Ovary (tissue), 10 donors: ENCODE measurements at regions of chr7 and their contacts with region 1.

Region 1: GRCh38 chr7:140924019-140924820 is 509 bp downstream of the BRAF start:
- DNase-seq: peak; percentile 74 to 78 (median 76)
- H3K4me3 ChIP-seq: peak overlapping the region; percentile 98
- H3K27ac ChIP-seq: peak overlapping the region; percentile 92 to 93
- H3K4me1 ChIP-seq: no peaks in the 10 kb centered on the region
- H3K27me3 ChIP-seq: no peaks in the 10 kb centered on the region
- CTCF ChIP-seq: peak in 2 of 3 donors; percentile 23 to 33
- EP300 ChIP-seq: no peak
- POLR2A ChIP-seq: no peak

Region 2: GRCh38 chr7:140551355-140552239 is 372.6 kb before region 1 on chr7:
- intact Hi-C with region 1: no loop called
- DNase-seq: peak in 3 of 5 donors; percentile 39 to 59 (median 42)
- H3K4me3 ChIP-seq: no peak overlapping the region
- H3K27ac ChIP-seq: no peak overlapping the region
- H3K4me1 ChIP-seq: peaks cover 3% of the 10 kb centered on the region
- H3K27me3 ChIP-seq: no peaks in the 10 kb centered on the region
- CTCF ChIP-seq: no peak
- EP300 ChIP-seq: no peak
- POLR2A ChIP-seq: no peak

Region 3: DNA sequence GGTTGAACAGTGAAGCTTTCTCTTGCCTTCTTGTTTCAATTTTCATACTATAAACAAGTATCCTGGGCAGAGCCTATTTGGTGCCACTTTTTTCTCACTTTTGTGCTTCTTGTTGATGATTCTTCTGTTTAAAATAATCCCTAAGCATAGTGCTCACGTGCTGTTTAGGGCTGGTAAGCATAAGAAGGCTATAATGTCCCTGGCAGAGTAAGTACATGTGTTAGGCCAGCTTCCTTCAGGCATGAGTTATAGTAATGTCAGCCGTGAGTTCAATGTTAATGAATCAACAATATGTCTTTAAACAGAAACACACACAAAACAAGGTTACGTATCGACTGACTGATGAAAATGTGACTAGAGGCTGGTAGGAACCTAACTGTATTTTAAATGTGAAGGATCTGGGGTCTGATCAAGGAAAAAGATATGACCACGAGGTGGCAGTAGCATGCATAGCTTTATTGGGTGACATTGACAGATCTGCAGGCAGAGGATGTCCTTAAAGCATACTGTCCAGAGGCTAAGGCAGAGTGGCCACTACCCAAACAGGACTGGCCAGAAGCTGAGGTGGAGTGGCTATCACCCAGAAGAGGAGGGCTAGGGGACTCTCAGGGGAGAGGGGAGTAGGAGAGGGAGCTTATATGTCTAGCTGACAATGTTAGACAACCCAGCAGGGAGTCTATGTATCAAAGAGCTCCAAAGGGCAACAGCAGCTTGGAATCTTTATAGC is 113.2 kb before region 1 on chr7:
- intact Hi-C with region 1: loop called in 1 of 4 experiments (anchors 10 kb)
- DNase-seq: peak in 4 of 5 donors; percentile 21 to 50 (median 36)
- H3K4me3 ChIP-seq: no peak overlapping the region
- H3K27ac ChIP-seq: no peak overlapping the region
- H3K4me1 ChIP-seq: no peaks in the 10 kb centered on the region
- H3K27me3 ChIP-seq: no peaks in the 10 kb centered on the region
- CTCF ChIP-seq: peak; percentile 24 to 57 (median 45)
- EP300 ChIP-seq: no peak
- POLR2A ChIP-seq: no peak

Region 4: DNA sequence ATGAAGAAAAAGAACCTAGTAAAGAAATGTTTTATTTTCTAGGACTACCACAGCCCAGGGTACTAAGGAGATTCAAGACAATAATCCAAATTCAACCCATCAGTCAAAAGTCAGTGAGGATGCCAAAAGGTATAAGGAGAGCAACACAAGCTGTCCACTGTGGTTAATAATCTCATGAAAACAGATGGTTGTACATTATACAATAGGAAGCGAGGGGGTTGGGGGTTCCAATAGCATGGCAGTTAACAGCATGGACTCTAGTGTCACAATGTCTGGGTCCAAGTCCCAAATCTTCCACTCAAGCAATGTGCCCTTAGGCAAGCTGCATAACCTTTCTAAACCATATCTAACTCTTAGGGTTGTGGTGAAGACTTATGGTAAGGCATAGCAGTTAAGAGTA is 34.6 kb before region 1 on chr7:
- intact Hi-C with region 1: no loop called
- DNase-seq: no peak
- H3K4me3 ChIP-seq: no peak overlapping the region
- H3K27ac ChIP-seq: no peak overlapping the region
- H3K4me1 ChIP-seq: peaks cover 5% of the 10 kb centered on the region
- H3K27me3 ChIP-seq: no peaks in the 10 kb centered on the region
- CTCF ChIP-seq: no peak
- EP300 ChIP-seq: no peak
- POLR2A ChIP-seq: no peak

Region 5: DNA sequence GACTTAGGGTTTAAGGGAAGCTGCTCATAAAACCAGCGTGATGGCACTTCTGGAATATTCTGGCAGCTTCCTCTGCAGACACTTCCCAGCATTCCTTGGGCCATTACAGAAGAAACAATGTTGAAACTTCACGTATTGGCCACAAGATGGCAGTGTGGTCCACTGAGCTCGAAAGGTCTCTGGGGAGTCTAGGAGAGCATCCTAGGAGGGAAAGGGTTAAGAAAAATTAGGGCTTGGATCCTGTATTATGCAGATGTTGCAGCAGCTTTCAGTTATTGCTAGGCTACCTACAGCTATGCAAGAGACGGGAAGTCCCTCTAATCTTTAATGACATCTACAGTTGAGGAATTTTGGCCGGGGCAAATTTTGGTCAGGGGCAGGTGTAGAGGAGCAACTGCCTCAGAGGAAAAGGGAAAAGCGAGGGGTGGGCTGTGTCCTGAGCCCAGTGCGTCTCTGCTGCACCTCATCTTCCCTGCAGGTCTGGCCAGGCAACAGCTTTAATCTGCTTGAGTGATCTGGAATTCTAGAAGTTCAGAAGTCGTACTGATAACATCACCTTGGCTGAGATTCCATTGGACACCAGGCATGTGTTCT is 1554.4 kb after region 1 on chr7:
- intact Hi-C with region 1: loop called in 1 of 4 experiments (anchors 5 kb)
- DNase-seq: no peak
- H3K4me3 ChIP-seq: no peak overlapping the region
- H3K27ac ChIP-seq: no peak overlapping the region
- H3K4me1 ChIP-seq: no peaks in the 10 kb centered on the region
- H3K27me3 ChIP-seq: no peaks in the 10 kb centered on the region
- CTCF ChIP-seq: no peak
- EP300 ChIP-seq: no peak
- POLR2A ChIP-seq: no peak

Region 6: GRCh38 chr7:142632291-142633134 is 1708.3 kb after region 1 on chr7:
- intact Hi-C with region 1: loop called in 1 of 4 experiments (anchors 5 kb)
- DNase-seq: peak in 4 of 5 donors; percentile 15 to 49 (median 23)
- H3K4me3 ChIP-seq: no peak overlapping the region
- H3K27ac ChIP-seq: no peak overlapping the region
- H3K4me1 ChIP-seq: no peaks in the 10 kb centered on the region
- H3K27me3 ChIP-seq: no peaks in the 10 kb centered on the region
- CTCF ChIP-seq: peak in 2 of 3 donors; percentile 13 to 39
- EP300 ChIP-seq: no peak
- POLR2A ChIP-seq: no peak